Activated T-helper 2 cell treated with anti-CD3 and anti-CD28 coated beads, Interferon-gamma antibody, Interleukin-2, Interleukin-4, amounts not matched to agents 10 μg/mL and 5 μg/mL and 100 μg/mL, durations not matched to agents 14 hours and 24 hours and 36 hours (primary cell): ENCODE measurements at regions of chr11 and their contacts with region 1.

Region 1: GRCh38 chr11:67439321-67439883 is 1.9 kb upstream of the PTPRCAP start:
- DNase-seq: no peak
- H3K4me3 Mint-ChIP-seq: peak overlapping the region; percentile 94
- H3K27ac Mint-ChIP-seq: peak overlapping the region; percentile 95
- H3K4me1 Mint-ChIP-seq: peaks cover 37% of the 10 kb centered on the region
- H3K27me3 Mint-ChIP-seq: no peaks in the 10 kb centered on the region

Region 2: DNA sequence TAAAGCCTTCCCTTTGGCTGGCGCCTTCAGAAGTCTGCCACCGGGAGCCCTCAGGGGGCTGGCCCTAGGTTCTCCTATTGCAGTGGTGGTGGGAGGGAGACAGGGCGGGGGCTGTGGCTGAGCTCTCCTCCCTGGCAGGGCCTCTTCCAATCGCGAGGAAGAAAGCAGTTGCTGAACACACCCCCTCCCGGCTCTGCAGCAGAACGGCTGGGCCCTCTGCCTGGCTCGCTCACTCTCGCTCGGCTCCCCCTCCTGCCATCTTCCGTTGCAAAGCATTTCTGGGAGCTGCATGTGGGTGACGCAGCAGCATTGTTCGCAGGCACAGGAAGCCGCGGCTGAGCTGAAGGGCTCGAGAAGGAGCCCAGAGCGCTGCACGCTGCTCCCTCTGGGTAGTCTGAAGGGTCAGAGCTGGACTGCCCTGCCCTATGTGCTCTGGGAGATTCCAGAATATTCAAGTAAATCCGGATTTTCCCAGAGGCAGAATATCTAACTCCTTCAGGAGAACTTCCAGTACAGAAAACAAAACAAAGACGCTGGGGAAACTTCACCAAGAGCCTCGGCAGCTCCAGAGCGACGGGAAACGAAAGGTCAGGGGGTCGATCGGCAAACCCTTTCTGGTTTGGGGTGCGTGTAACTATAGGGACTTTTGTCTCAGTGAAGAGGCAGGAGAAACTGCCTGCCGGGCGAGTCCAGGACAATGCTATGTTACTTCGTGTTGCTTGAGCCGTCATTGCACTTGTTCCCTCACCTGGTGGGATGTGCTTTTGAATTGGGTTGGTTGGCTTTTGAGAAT is 199.4 kb before region 1 on chr11:
- intact Hi-C with region 1: no loop called
- DNase-seq: peak; percentile 97
- H3K4me3 Mint-ChIP-seq: peak overlapping the region; percentile 99
- H3K27ac Mint-ChIP-seq: peak overlapping the region; percentile 99
- H3K4me1 Mint-ChIP-seq: peaks cover 30% of the 10 kb centered on the region
- H3K27me3 Mint-ChIP-seq: no peaks in the 10 kb centered on the region

Region 3: GRCh38 chr11:67428052-67428914 is 11.1 kb before region 1 on chr11 and contains the start of gene RPS6KB2:
- intact Hi-C with region 1: loop called (anchors 1 kb)
- DNase-seq: peak; percentile 98
- H3K4me3 Mint-ChIP-seq: peak within 1 kb of the TSS; percentile 98
- H3K27ac Mint-ChIP-seq: peak within 1 kb of the TSS; percentile 93
- H3K4me1 Mint-ChIP-seq: peaks cover 15% of the 10 kb centered on the region
- H3K27me3 Mint-ChIP-seq: no peaks in the 10 kb centered on the region
- total RNA-seq, gene RPS6KB2: 67.6 and 70.2 TPM in 2 replicates